PC-9 (cell line): ENCODE measurements at regions of chr1 and their contacts with region 1.

Region 1: DNA sequence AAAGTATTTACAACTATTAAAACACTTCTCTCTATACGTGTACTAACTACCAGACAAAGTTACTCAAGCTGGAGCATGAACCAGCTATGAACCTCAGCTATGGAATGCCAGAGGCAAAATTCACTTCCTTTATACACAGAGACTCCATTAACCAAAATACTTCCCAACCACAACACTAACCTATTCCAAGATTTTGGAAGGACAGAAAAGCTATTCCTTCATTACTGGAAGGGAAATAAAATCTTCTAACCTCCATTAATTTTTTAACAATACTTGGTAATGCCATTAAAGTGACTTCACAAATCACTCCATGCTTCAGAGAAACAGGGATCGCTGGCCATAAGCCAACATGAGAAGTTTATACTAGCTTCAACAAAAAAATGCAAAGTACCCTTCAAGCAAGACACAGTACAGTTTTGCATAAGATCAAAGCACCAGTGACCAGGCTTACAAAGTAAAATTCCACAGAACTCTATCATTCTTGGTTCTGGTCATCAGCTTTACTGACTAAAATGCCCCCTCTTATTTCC is 58.0 kb downstream of the PUM1 start:
- DNase-seq: no peak
- H3K4me3 ChIP-seq: no peak overlapping the region
- H3K27ac ChIP-seq: peak overlapping the region; percentile 20; the same call in 1 of the 2 replicates
- H3K4me1 ChIP-seq: peaks cover 11% of the 10 kb centered on the region; the same call in 1 of the 2 replicates
- H3K27me3 ChIP-seq: no peaks in the 10 kb centered on the region
- CTCF ChIP-seq: no peak

Region 2: GRCh38 chr1:30778154-30778978 is 229.2 kb before region 1 on chr1:
- CTCF ChIA-PET with region 1: no interaction called
- POLR2A ChIA-PET with region 1: no interaction called
- intact Hi-C with region 1: no loop called
- DNase-seq: peak; percentile 51 to 65
- H3K4me3 ChIP-seq: no peak overlapping the region
- H3K27ac ChIP-seq: no peak overlapping the region
- H3K4me1 ChIP-seq: peaks cover 10% of the 10 kb centered on the region; the same call in 1 of the 2 replicates
- H3K27me3 ChIP-seq: no peaks in the 10 kb centered on the region
- CTCF ChIP-seq: no peak

Region 3: GRCh38 chr1:30847358-30847972 is 160.1 kb before region 1 on chr1:
- CTCF ChIA-PET with region 1: no interaction called
- POLR2A ChIA-PET with region 1: no interaction called
- intact Hi-C with region 1: no loop called
- DNase-seq: peak in 1 of 2 experiments; percentile 61
- H3K4me3 ChIP-seq: no peak overlapping the region
- H3K27ac ChIP-seq: no peak overlapping the region
- H3K4me1 ChIP-seq: no peaks in the 10 kb centered on the region
- H3K27me3 ChIP-seq: peaks cover 35% of the 10 kb centered on the region
- CTCF ChIP-seq: no peak

Region 4: DNA sequence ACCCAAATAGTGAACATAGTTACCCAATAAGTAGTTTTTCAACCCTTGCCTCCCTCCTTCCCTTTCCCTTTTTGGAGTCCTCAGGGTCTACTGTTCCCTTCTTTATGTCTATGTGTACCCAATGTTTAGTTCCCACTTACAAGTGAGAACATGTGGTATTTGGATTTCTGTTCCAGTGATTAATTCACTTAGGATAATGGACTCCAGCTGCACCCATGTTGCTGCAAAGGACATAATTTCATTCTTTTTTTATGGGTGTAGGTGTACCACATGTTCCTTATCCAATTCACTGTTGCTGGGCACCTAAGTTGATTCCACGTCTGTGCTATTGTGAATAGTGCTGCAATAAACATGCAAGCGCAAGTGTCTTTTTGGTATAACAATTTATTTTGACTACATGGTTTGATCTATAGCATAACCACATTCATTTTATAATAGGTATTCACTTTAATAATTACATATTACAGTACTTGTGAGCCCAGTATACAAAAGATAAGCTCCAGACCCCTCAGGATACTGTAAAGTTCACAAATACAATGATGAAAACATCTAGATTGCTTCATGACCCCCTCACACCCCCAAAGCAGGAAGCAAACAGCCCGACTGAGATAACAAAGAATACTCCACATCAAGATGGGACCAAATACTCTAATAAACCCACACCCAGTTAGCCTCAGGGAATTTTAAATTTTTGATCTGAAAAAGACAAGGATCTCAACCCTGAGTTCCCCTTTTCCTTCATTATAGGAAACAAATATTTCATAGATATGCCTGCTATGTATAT is 12.7 kb after region 1 on chr1:
- CTCF ChIA-PET with region 1: no interaction called
- POLR2A ChIA-PET with region 1: no interaction called
- intact Hi-C with region 1: loop called (anchors 2 kb)
- DNase-seq: no peak
- H3K4me3 ChIP-seq: no peak overlapping the region
- H3K27ac ChIP-seq: no peak overlapping the region
- H3K4me1 ChIP-seq: peaks cover 7% of the 10 kb centered on the region
- H3K27me3 ChIP-seq: no peaks in the 10 kb centered on the region
- CTCF ChIP-seq: no peak

Region 5: GRCh38 chr1:31038360-31038759 is 30.8 kb after region 1 on chr1:
- CTCF ChIA-PET with region 1: interaction called, 7 read pairs
- POLR2A ChIA-PET with region 1: interaction called, 14 read pairs
- intact Hi-C with region 1: no loop called
- DNase-seq: no peak
- H3K4me3 ChIP-seq: no peak overlapping the region
- H3K27ac ChIP-seq: no peak overlapping the region
- H3K4me1 ChIP-seq: no peaks in the 10 kb centered on the region; the same call in 1 of the 2 replicates
- H3K27me3 ChIP-seq: no peaks in the 10 kb centered on the region
- CTCF ChIP-seq: no peak

Region 6: DNA sequence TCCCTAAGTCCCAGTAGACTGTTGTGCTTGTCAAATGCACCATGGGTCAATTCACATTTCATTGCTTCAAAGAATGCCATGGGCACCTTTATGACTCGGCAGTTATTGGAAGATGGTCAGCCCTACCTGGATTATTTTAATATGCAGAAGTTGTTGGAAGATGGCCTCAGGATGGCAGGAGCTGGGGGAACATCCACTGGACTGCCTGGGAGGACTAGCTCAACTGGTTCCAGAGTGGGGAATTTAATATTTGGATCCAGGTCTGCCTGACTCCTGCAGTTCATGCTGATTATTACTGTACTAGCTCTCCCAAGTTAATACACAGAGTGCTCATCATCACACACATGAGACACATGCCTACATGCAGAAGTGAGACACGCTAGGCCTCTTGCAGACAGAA is 167.0 kb after region 1 on chr1:
- CTCF ChIA-PET with region 1: no interaction called
- POLR2A ChIA-PET with region 1: no interaction called
- intact Hi-C with region 1: no loop called
- DNase-seq: no peak
- H3K4me3 ChIP-seq: no peak overlapping the region
- H3K27ac ChIP-seq: no peak overlapping the region
- H3K4me1 ChIP-seq: peaks cover 11% of the 10 kb centered on the region
- H3K27me3 ChIP-seq: no peaks in the 10 kb centered on the region
- CTCF ChIP-seq: no peak